Testis (tissue), 5 donors: ENCODE measurements at regions of chr14 and their contacts with region 1.

Region 1: GRCh38 chr14:20454516-20455354 is at the starts of genes APEX1 and OSGEP:
- DNase-seq: peak; percentile 99
- H3K4me3 ChIP-seq: peak within 1 kb of the TSS; percentile 69 to 89
- H3K27ac ChIP-seq: peak within 1 kb of the TSS; percentile 84 to 91
- H3K4me1 ChIP-seq: peaks cover 14% of the 10 kb centered on the region
- H3K27me3 ChIP-seq: no peaks in the 10 kb centered on the region
- CTCF ChIP-seq: no peak
- POLR2A ChIP-seq: peak; percentile 19
- total RNA-seq, gene APEX1: 56.7 to 76.2 TPM
- total RNA-seq, gene OSGEP: 47.2 to 58.8 TPM

Region 2: GRCh38 chr14:20343092-20343861 is 111.5 kb before region 1 on chr14 and contains the start of gene PARP2:
- intact Hi-C with region 1: loop called (anchors 10 kb)
- DNase-seq: peak; percentile 97
- H3K4me3 ChIP-seq: peak within 1 kb of the TSS; percentile 56 to 78
- H3K27ac ChIP-seq: peak within 1 kb of the TSS; percentile 88 to 94
- H3K4me1 ChIP-seq: no peaks in the 10 kb centered on the region
- H3K27me3 ChIP-seq: no peaks in the 10 kb centered on the region
- CTCF ChIP-seq: no peak
- POLR2A ChIP-seq: no peak
- total RNA-seq, gene PARP2: 38.1 to 50.7 TPM

Region 3: DNA sequence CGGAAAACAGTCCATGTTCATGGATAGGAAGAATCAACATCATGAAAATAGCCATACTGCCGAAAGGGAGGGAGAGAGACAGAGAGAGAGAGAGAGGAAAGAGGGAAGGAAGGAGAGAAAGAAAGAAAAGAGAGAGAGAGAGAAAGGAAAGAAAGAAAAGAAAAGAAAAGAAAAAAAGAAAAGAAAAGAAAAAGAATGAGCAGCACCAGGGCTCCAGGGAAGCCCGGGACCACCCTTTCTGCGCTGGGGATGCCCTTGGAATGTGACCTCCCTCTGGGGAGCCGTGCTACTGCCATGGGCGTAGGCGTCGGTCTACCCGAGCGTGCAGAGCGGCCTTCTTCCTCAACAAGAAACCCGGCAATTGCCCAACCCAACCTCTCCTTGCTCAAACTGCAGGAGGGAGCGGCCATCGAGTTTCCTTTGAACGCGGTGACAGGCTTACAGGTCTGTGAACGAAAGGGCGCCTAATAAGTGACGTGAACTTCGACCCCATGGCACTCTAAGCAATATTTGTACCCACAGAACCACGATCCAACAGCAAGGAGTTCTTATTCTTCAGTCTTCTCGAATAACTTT is 169.8 kb after region 1 on chr14:
- intact Hi-C with region 1: no loop called
- DNase-seq: peak; percentile 54
- H3K4me3 ChIP-seq: peak overlapping the region; percentile 0 to 9
- H3K27ac ChIP-seq: no peak overlapping the region
- H3K4me1 ChIP-seq: peaks cover 13% of the 10 kb centered on the region
- H3K27me3 ChIP-seq: no peaks in the 10 kb centered on the region
- CTCF ChIP-seq: no peak
- POLR2A ChIP-seq: no peak

Region 4: DNA sequence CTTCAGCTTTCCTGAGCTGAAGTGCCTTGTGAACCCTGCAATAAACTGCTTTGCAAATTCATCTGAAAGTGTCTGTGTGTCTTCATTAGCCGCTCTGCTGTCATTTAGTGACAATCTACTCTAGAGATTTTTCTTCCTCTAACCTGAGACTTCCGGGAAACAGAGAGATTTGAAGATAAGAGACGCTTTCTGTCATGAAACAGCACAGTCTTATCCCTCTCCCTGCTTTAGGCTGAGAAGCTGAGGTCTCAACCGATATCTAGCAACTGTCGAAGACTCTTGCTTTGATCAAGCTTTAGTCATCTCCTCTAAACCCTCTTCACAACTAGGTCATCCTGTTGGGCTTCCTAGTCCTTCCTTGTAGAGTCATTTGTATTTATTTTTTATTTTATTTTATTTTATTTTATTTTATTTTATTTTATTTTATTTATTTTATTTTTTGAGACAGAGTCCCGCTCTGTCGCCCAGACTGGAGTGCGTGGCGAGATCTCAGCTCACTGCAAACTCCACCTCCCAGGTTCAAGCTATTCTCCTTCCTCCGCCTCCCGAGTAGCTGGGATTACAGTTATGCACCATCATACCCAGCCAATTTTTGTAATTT is 501.7 kb after region 1 on chr14:
- intact Hi-C with region 1: no loop called
- DNase-seq: no peak
- H3K4me3 ChIP-seq: no peak overlapping the region
- H3K27ac ChIP-seq: no peak overlapping the region
- H3K4me1 ChIP-seq: no peaks in the 10 kb centered on the region
- H3K27me3 ChIP-seq: no peaks in the 10 kb centered on the region
- CTCF ChIP-seq: no peak
- POLR2A ChIP-seq: no peak